Adrenal gland (tissue), 19 donors: ENCODE measurements at regions of chr14 and their contacts with region 1.

Region 1: GRCh38 chr14:21352587-21352986 is 31.2 kb downstream of the SUPT16H start:
- DNase-seq: peak in 3 of 7 donors; percentile 17 to 22 (median 19)
- H3K4me3 ChIP-seq: no peak overlapping the region
- H3K27ac ChIP-seq: peak overlapping the region in 1 of 5 donors; percentile 18
- H3K4me1 ChIP-seq: no peaks in the 10 kb centered on the region
- H3K27me3 ChIP-seq: no peaks in the 10 kb centered on the region
- CTCF ChIP-seq: no peak
- POLR2A ChIP-seq: no peak

Region 2: GRCh38 chr14:20376071-20376588 is 976.5 kb before region 1 on chr14:
- intact Hi-C with region 1: no loop called
- DNase-seq: no peak
- H3K4me3 ChIP-seq: no peak overlapping the region
- H3K27ac ChIP-seq: no peak overlapping the region
- H3K4me1 ChIP-seq: no peaks in the 10 kb centered on the region
- H3K27me3 ChIP-seq: no peaks in the 10 kb centered on the region
- CTCF ChIP-seq: no peak
- POLR2A ChIP-seq: no peak

Region 3: DNA sequence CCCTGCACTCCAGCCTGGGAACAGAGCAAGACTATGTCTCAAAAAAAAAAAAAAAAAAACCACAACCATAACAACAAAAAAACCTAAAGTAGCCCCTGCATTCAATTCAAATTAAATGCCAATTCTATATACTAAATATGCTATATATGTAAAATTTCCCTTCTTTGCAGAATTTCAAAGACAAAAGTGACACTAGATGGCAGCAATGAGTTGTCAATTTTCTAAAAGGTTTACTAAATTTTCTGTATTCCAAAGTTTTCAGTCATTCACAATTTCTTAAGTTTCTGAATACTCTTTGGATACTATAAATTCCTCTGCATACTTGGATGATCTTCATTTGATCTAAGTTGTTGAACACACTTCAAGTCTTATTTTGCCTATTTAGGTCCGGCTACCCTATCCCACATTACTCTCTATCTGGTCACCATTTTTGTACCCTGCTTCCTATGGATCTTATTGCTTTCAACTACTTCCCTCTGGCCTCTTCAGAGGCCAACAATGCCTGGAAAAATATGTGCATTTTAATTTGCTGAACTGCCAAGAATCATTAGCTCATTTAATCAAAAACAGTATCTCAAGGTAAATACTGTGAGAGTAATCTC is 111.3 kb before region 1 on chr14:
- intact Hi-C with region 1: loop called in 1 of 2 experiments (anchors 10 kb)
- DNase-seq: no peak
- H3K4me3 ChIP-seq: no peak overlapping the region
- H3K27ac ChIP-seq: no peak overlapping the region
- H3K4me1 ChIP-seq: peaks cover 3 to 47% of the 10 kb centered on the region in 2 donors
- H3K27me3 ChIP-seq: no peaks in the 10 kb centered on the region
- CTCF ChIP-seq: peak in 5 of 6 experiments; percentile 16 to 51 (median 42)
- POLR2A ChIP-seq: no peak

Region 4: DNA sequence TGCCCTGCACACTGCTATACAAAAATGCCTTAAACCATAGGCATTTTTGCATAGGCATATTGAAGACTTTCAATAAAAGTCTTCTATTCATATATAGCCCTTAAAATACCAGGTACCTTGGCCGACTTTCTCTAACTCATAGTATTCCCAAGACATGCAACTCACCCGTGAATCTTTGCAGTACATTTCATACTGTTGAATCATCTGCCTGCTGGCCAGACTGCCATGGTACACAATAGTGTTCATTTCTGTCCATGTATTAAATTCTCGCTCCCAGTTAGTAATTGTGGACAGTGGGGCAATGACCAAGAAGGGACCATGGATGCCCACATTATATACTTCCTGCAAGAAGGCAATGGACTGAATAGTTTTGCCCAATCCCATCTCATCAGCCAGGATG is 55.6 kb after region 1 on chr14:
- intact Hi-C with region 1: loop called in 1 of 2 experiments (anchors 10 kb)
- DNase-seq: no peak
- H3K4me3 ChIP-seq: no peak overlapping the region
- H3K27ac ChIP-seq: no peak overlapping the region
- H3K4me1 ChIP-seq: no peaks in the 10 kb centered on the region
- H3K27me3 ChIP-seq: no peaks in the 10 kb centered on the region
- CTCF ChIP-seq: no peak
- POLR2A ChIP-seq: no peak